ENCODE measurements at regions of chr1 and their contacts with region 1.

Region 1: DNA sequence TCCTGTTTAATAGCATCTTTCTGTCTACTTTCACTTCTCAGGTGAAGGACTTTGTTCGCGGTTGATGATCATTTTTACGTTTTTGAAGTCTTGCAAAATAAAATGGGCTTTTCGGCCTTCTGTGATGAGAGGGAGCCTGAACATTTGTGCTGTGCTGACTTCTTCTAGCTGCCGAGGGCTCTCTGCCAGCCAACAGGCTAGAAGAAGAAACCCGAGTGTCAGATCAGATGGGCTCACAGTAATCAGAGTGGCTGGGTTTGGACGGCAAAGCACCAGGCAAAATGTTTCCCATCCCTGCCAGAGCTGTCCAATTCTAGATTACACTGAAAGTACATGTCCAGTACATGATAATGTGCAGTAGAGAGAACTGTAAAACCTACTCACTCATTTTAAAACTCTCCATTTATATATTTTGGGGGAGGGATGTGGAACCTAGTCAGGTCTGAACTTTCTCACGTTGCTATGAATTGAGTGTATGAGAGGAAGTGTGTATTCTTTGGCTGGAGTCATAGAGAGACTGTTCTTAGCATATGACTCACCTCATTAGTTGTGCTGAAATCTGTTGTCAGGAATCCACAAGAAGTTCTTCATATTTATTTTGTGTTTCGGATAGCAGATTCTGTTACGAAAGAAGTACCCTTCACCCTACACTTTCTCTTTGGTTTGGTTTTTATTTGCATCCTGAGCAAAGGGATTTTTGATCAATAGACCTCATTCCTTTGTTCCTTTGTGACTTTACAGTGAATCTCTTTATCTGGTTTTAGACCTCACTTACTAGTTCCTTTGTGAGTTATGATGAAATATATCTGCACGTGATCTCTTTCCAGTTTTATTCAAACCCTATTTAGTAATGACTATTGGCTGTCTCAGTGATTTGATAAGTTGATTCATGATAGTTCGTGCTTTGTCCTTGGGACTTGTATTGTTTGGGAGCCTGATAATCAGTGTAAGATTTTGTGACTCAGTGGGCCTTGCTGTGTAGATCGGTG is 4.8 kb downstream of the ATP1A1 start:
- DNase-seq: peak; percentile 59

Region 2: DNA sequence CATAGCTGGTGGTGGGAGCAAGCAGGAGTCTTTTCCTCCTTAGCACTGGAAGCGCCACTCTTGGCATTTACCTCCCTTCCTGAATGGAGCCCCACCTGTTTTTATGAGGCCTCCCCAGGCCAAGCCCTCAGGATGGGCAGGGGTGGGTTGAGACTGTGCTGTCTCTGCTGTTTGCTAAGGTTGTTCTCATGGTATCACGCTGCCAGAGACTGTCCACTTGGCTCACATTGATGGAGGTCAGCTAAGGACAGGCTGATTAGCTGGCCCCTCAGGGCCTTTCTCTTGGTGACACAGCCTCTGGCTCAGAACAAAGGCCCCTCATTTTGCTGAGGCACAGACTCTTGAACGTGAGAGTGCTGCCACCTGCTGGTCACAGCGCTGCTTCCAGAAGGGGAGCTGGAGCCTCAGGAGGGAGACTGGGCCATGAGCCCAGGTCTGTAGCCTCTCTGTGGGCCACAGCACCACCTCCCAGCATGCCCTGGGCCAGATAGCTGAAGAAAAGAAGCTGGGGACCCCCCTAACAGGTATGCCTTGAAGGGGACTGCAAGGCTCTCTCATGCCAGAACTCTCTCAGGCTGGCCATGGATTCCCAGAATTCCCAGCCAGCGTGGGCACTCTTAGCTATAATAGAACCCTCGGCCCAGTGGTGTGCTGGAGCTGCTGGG is 107.4 kb after region 1 on chr1:
- in situ Hi-C with region 1: loop called (anchors 25 kb)
- DNase-seq: peak; percentile 94

Measured in SK-MEL-5 (cell line).